ENCODE measurements at regions of chr6 and their contacts with region 1.

Region 1: DNA sequence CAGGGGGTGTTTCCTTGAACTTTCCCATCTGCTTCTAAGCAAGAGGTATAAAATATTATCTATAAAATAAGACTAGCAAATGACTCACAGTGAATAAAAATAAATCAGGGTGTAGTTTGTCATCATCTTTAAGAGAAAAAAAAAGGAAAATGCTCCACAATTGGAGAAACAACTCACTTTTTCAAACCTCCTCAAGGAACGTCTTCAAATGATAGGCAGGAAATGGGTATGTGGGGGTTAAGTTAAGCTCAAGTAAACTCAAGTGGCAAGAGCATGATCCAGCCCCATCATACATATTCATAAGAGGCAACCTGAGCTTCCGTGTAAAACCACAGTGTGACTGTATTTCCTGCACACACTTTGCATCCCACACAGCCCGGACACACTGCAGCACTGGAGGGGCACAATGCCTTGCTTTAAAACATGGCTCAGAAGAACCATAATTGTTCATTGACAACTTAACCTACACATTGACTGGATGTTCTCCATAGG is 58.5 kb upstream of the CEP85L start:
- DNase-seq: peak; percentile 82
- H3K4me3 ChIP-seq: peak overlapping the region in 2 of 3 experiments; percentile 31 to 57
- H3K27ac ChIP-seq: peak overlapping the region; percentile 89
- H3K4me1 ChIP-seq: peaks cover 57% of the 10 kb centered on the region
- H3K27me3 ChIP-seq: no peaks in the 10 kb centered on the region
- CTCF ChIP-seq: no peak

Region 2: GRCh38 chr6:118639054-118639964 is 70.6 kb before region 1 on chr6:
- CTCF ChIA-PET with region 1: no interaction called
- dilution Hi-C with region 1: no loop called
- in situ Hi-C with region 1: no loop called
- intact Hi-C with region 1: no loop called
- DNase-seq: no peak
- H3K4me3 ChIP-seq: no peak overlapping the region
- H3K27ac ChIP-seq: no peak overlapping the region
- H3K4me1 ChIP-seq: no peaks in the 10 kb centered on the region
- H3K27me3 ChIP-seq: no peaks in the 10 kb centered on the region
- CTCF ChIP-seq: no peak

Region 3: DNA sequence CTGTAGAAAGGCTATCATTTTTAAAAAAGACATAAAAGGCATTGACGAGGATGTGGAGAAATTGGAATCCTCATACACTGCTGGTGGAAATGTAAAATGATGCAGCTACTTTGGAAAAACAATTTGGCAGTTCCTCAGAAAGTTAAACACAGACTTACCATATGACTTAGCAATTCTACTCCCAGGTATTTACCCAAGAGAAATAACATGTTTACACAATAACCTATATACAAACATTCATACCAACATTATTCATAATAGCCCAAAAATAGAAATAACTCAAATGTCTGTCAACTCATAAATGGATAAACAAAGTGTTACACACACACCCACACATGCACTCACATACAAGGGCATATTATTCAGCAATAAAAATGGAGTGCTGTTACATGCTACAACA is 35.1 kb before region 1 on chr6:
- CTCF ChIA-PET with region 1: no interaction called
- dilution Hi-C with region 1: loop called (anchors 5 kb)
- in situ Hi-C with region 1: no loop called
- intact Hi-C with region 1: no loop called
- DNase-seq: no peak
- H3K4me3 ChIP-seq: no peak overlapping the region
- H3K27ac ChIP-seq: no peak overlapping the region
- H3K4me1 ChIP-seq: peaks cover 11% of the 10 kb centered on the region
- H3K27me3 ChIP-seq: no peaks in the 10 kb centered on the region
- CTCF ChIP-seq: no peak

Region 4: GRCh38 chr6:118902726-118903125 is 192.8 kb after region 1 on chr6:
- CTCF ChIA-PET with region 1: no interaction called
- dilution Hi-C with region 1: no loop called
- in situ Hi-C with region 1: no loop called
- intact Hi-C with region 1: no loop called
- DNase-seq: peak; percentile 19
- H3K4me3 ChIP-seq: no peak overlapping the region
- H3K27ac ChIP-seq: peak overlapping the region; percentile 35
- H3K4me1 ChIP-seq: peaks cover 10% of the 10 kb centered on the region
- H3K27me3 ChIP-seq: no peaks in the 10 kb centered on the region
- CTCF ChIP-seq: no peak